Brain microvascular endothelial cell (primary cell): ENCODE measurements at regions of chr12 and their contacts with region 1.

Region 1: DNA sequence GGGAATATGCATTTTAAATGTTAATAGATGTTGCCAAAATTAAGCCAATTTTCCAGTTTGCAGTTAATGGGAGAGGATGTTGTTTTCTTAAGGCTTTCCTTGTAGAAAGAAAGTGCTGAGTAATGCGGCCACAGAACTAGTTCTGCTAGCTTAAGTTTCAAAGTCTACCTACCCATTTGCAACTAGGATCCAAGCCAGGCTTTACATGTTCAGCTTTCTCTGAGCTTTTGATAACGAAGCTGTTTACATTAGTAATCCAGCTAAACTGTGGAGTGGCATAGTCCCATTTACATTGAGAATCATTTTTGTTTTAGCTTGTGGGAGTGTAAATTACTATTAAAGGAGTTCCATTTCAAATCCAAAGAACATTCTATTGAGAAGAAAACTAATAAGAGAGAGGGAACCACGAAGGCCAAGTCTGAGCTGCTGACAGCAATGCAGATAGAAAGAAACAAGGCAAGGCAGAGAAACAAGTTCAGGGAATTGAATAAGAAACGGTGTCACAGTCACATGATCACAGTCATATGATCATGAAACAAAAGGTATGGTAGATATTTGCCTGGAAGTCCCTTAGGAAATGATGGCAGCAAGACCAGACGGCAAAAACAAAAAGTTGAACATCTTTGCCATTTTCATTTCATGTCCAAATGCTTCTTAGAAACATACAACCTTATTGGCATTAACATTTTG is 274.9 kb downstream of the PAWR start:
- DNase-seq: no peak
- H3K4me3 ChIP-seq: no peak overlapping the region
- H3K27ac ChIP-seq: no peak overlapping the region
- H3K27me3 ChIP-seq: no peaks in the 10 kb centered on the region
- CTCF ChIP-seq: no peak

Region 2: DNA sequence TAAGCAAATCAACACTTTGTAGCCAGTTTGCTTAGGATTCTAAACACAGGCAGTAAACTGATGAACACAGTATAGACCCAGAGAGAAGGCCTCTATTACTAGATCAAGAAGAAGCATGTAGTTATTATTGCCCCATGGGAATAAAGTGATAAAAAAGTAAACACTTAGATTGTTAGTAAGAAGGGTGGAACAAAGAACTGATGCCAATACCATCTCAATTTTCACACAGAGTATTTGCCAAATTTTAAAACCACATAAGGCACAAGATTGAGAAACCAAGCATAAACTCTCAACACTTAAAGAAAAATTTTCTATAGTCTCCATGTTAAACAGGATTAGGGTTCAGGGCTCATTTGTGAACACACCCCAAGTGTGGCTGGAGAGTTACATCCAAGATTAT is 628.3 kb before region 1 on chr12:
- in situ Hi-C with region 1: no loop called
- DNase-seq: no peak
- H3K4me3 ChIP-seq: no peak overlapping the region
- H3K27ac ChIP-seq: no peak overlapping the region
- H3K27me3 ChIP-seq: no peaks in the 10 kb centered on the region
- CTCF ChIP-seq: no peak

Region 3: GRCh38 chr12:79531122-79531913 is 115.4 kb after region 1 on chr12:
- in situ Hi-C with region 1: loop called (anchors 10 kb)
- DNase-seq: peak; percentile 72
- H3K4me3 ChIP-seq: no peak overlapping the region
- H3K27ac ChIP-seq: peak overlapping the region; percentile 39
- H3K27me3 ChIP-seq: no peaks in the 10 kb centered on the region
- CTCF ChIP-seq: no peak